GM12878 (cell line): ENCODE measurements at regions of chr9 and their contacts with region 1.

Region 1: DNA sequence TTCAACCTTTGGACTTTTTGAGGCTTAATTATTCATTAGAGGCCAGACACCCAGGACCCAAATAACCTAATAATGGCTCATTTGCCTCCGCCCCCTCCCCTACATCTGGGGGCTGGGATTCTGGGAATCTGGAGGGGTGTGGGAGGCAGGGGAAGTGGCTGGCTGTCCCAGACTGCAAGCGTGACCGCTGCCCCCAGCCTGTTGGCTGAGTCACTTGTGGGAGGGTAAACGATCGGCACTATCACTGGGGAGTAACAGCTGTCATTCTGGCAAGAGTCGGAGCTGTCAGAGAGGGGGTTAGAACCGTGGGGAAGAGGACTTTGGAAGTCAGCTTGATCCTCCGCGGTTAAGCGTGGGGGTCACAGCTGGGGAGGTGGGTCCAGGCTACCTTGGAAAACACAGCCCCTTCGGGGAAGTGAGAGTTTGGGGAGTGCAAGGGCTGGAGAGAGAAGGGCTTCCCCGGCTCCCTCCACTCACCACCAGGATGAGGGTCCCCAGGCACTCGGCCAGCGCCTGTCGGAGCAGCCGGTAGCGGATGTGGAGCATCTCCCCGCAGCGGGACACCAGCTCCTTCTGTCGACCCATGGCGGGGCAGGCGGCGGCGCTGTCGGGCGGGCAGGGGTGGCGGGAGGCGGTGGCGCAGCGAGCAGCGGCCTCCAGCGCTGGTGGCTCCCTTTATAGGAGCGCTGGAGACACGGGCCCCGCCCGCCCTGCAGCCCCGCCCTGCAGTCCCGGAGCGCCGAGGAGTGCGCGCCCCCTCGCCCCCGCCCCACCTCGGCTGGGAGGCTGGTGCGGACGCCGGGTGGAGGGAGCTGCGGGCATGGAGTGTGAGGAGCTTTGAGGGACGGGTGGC is at the start of gene AQP3:
- DNase-seq: no peak
- ATAC-seq: peak; percentile 82
- H3K4me3 ChIP-seq: peak within 1 kb of the TSS; percentile 40; the same call in 1 of the 2 replicates
- H3K27ac ChIP-seq: 0 out of 2 replicates have a peak within 1 kb of the TSS, but pooled peaks have one; percentile 20
- H3K4me1 ChIP-seq: peaks cover 31% of the 10 kb centered on the region
- H3K27me3 ChIP-seq: 0 out of 4 replicates have a peak, but pooled peaks cover 0 to 1% of the 10 kb centered on the region in 2 experiments
- CTCF ChIP-seq: peak; percentile 19 to 31 (median 20); a peak in 4 of 6 replicates
- EP300 ChIP-seq: no peak
- POLR2A ChIP-seq: peak; percentile 54; the same call in 1 of the 2 replicates
- RAD21 ChIP-seq: no peak
- polyA plus RNA-seq, gene AQP3: 0.60 to 0.71 TPM

Region 2: DNA sequence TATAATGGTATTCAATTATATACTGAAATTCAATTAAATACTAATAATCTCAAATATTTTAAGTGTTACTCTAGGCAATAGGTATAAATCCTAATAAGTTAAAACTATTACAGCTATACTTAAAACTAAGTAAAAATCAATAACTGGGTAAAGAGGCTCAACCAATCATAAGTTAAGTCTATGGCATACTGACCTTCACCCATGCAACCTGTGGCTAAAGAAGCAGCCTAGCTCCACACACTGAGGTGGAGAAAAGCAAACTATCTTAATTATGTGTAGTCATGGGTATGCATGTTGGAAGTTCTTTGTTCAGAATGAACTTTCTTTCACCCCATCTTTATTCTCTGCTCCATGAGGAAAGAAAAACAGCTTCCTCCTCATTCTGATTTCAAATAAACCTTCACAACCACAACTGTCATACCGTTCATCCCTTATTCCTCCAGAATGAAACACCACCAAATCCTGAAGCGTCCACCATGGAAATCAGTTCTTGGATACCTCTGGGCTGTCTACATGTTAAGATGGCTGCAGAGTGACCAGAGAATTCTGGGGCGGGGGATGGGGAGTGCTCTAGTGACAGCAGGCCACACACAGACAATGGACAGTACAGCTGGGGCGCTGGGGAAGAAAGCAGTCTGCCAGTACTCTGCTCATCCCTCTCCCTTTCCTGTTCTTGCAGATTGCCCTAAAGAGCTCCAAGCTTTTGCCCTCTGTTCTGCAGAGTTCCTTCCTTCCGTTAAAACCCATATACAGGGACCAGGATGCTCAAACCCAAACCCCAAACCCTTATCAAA is 983.5 kb before region 1 on chr9:
- CTCF ChIA-PET with region 1: no interaction called
- POLR2A ChIA-PET with region 1: no interaction called
- RAD21 ChIA-PET with region 1: no interaction called
- SMC1A ChIA-PET with region 1: no interaction called
- in situ Hi-C with region 1: no loop called
- intact Hi-C with region 1: no loop called
- DNase-seq: no peak
- ATAC-seq: no peak
- H3K4me3 ChIP-seq: no peak overlapping the region
- H3K27ac ChIP-seq: no peak overlapping the region
- H3K4me1 ChIP-seq: no peaks in the 10 kb centered on the region
- H3K27me3 ChIP-seq: no peaks in the 10 kb centered on the region
- CTCF ChIP-seq: no peak
- EP300 ChIP-seq: no peak
- POLR2A ChIP-seq: no peak
- RAD21 ChIP-seq: no peak

Region 3: DNA sequence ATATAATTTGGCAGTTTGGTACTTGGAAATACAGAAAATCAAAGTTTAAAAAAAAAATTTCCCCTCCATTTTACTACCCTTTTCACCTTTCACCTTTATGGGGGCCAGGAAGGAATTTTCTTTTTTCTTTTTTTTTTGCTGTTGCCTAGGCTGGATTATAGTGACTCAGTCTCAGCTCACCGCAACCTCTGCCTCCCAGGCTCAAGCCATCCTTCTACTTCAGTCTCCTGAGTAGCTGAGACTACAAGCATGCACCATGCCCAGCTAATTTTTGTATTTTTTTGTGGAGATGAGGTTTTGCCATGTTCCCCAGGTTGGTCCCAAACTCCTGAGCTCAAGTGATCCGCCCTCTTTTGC is 173.2 kb before region 1 on chr9:
- CTCF ChIA-PET with region 1: no interaction called
- POLR2A ChIA-PET with region 1: no interaction called
- RAD21 ChIA-PET with region 1: no interaction called
- SMC1A ChIA-PET with region 1: no interaction called
- in situ Hi-C with region 1: no loop called
- intact Hi-C with region 1: no loop called
- DNase-seq: no peak
- ATAC-seq: no peak
- H3K4me3 ChIP-seq: no peak overlapping the region
- H3K27ac ChIP-seq: no peak overlapping the region
- H3K4me1 ChIP-seq: no peaks in the 10 kb centered on the region; the same call in 1 of the 2 replicates
- H3K27me3 ChIP-seq: no peaks in the 10 kb centered on the region
- CTCF ChIP-seq: no peak
- EP300 ChIP-seq: no peak
- POLR2A ChIP-seq: no peak
- RAD21 ChIP-seq: no peak

Region 4: GRCh38 chr9:33415501-33416038 is 31.6 kb before region 1 on chr9:
- CTCF ChIA-PET with region 1: interaction called, 113 read pairs
- POLR2A ChIA-PET with region 1: no interaction called
- RAD21 ChIA-PET with region 1: interaction called, 7 read pairs
- SMC1A ChIA-PET with region 1: interaction called, 18 read pairs
- in situ Hi-C with region 1: no loop called
- intact Hi-C with region 1: no loop called
- DNase-seq: peak; percentile 3
- ATAC-seq: peak; percentile 93
- H3K4me3 ChIP-seq: no peak overlapping the region
- H3K27ac ChIP-seq: no peak overlapping the region
- H3K4me1 ChIP-seq: no peaks in the 10 kb centered on the region
- H3K27me3 ChIP-seq: no peaks in the 10 kb centered on the region; a peak in 1 of 4 replicates
- CTCF ChIP-seq: peak; percentile 60 to 85 (median 78)
- EP300 ChIP-seq: no peak
- POLR2A ChIP-seq: no peak
- RAD21 ChIP-seq: peak; percentile 45

Region 5: GRCh38 chr9:33458444-33458843 is 11.3 kb after region 1 on chr9:
- CTCF ChIA-PET with region 1: interaction called, 154 read pairs
- POLR2A ChIA-PET with region 1: interaction called, 3 read pairs
- RAD21 ChIA-PET with region 1: interaction called, 3 read pairs
- SMC1A ChIA-PET with region 1: interaction called, 4 read pairs
- in situ Hi-C with region 1: no loop called
- intact Hi-C with region 1: no loop called
- DNase-seq: peak; percentile 32
- ATAC-seq: peak; percentile 72
- H3K4me3 ChIP-seq: 0 out of 2 replicates have a peak overlapping the region, but pooled peaks have one; percentile 8
- H3K27ac ChIP-seq: no peak overlapping the region
- H3K4me1 ChIP-seq: peaks cover 34% of the 10 kb centered on the region
- H3K27me3 ChIP-seq: no peaks in the 10 kb centered on the region
- CTCF ChIP-seq: no peak
- EP300 ChIP-seq: no peak
- POLR2A ChIP-seq: no peak
- RAD21 ChIP-seq: no peak

Region 6: GRCh38 chr9:33466565-33467495 is 19.7 kb after region 1 on chr9:
- CTCF ChIA-PET with region 1: interaction called, 154 read pairs
- POLR2A ChIA-PET with region 1: no interaction called
- RAD21 ChIA-PET with region 1: interaction called, 18 read pairs
- SMC1A ChIA-PET with region 1: interaction called, 20 read pairs
- in situ Hi-C with region 1: no loop called
- intact Hi-C with region 1: no loop called
- DNase-seq: no peak
- ATAC-seq: peak; percentile 91
- H3K4me3 ChIP-seq: no peak overlapping the region
- H3K27ac ChIP-seq: no peak overlapping the region
- H3K4me1 ChIP-seq: peaks cover under 1% of the 10 kb centered on the region
- H3K27me3 ChIP-seq: no peaks in the 10 kb centered on the region
- CTCF ChIP-seq: peak; percentile 81 to 99 (median 98)
- EP300 ChIP-seq: no peak
- POLR2A ChIP-seq: no peak
- RAD21 ChIP-seq: peak; percentile 84